ENCODE measurements at regions of chr10 and their contacts with region 1.

Region 1: DNA sequence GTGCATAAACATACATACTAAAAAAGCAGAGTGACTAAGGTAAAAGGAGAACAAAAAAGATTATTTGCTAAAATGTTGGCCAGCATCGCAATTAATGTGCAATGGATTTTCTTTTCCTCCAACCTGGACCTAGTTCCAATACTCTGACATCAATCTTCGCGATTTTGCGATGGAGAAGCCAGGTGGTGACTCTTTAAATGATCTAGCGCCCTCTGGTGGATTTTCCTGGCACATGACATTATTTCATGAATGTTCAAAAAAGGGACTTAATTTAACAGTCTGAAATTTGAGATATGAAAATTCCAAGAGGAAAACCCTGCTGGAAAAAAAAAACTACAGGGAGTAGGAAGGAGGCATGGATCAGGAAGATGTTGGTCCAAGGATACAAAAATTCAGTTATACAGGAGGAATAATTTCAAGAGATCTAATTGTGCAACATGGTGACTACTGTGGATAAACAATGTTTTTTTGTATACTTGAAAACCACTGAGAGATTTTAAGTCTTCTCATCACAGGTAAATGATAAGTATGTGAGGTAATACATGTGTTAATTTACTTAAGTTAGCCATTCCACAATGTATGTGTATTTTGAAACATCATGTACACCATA is 4.3 kb upstream of the KCNMA1 start:
- DNase-seq: peak; percentile 61 to 72
- H3K4me3 ChIP-seq: no peak overlapping the region
- H3K27ac ChIP-seq: no peak overlapping the region
- H3K4me1 ChIP-seq: peaks cover 11% of the 10 kb centered on the region; the same call in 1 of the 2 replicates
- H3K27me3 ChIP-seq: no peaks in the 10 kb centered on the region
- CTCF ChIP-seq: peak; percentile 98

Region 2: DNA sequence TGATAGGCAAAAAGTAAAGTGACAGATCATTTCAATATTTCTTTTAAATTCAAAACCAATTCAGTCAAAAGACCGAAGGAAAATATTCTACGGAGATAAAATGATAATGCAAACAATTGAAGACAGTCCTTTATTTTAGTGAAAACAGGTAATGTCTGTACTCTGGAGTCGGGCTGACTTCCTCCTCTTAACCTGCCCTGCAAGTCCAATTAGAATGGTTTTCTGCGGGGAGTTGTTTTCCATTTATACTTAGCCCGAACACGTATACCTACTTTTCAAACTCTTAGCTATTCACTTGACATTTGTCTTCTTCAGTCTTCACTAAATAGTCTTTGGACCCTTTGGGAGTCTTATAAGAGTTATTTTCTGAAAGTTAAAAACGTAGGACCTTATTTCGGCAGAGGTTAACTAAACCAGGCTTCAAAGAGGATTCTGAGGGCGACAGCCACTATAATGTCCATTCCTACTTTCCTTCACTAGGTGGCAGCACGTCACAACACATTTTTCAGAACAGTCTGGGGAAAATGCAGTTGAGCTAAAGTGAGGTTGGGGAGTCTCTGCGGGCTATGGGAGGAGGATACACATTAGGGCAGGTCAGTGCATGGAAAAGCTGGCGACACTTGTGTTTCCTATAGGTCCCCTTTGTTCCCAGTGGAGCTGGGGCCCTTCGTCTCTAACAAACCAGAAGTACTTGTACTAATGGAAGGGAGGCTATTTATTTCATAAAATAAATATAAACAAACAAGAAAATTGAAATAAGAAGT is 476.3 kb before region 1 on chr10:
- CTCF ChIA-PET with region 1: interaction called, 8 read pairs
- POLR2A ChIA-PET with region 1: no interaction called
- intact Hi-C with region 1: loop called (anchors 2 kb)
- DNase-seq: peak; percentile 49 to 54
- H3K4me3 ChIP-seq: no peak overlapping the region
- H3K27ac ChIP-seq: no peak overlapping the region
- H3K4me1 ChIP-seq: peaks cover 60% of the 10 kb centered on the region
- H3K27me3 ChIP-seq: no peaks in the 10 kb centered on the region
- CTCF ChIP-seq: peak; percentile 96

Region 3: DNA sequence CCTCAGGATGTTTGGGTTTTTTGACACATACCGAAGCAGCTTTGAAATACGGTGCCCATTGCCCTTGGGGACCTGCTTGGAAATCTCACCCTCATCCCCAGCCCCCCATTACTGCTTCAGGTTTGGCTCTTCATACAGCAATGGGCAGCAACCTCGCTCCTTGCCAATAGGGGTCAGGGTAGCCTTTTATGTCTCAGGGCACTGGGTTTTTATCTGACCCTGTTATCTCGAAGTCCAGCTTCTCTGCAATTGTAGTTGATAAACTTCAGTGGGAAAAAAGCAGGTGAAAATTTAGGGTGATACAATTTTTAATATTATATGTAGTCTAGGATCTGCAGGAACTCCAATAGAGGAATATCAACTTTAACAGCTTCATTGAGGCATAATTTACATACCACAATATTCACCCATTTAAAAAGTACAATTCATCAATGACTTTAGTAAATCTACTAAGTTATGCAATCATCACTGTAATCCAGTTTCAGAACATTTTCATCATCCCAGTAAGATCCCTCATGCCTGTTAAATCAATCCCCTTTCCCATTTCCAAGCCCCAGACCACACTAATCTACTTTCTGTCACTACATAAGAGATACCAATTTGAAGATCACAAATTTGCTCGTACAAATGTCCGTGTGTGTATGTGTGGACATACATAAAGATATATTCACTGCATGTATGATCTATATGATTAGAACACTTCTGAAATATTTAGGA is 390.4 kb before region 1 on chr10:
- CTCF ChIA-PET with region 1: no interaction called
- POLR2A ChIA-PET with region 1: no interaction called
- intact Hi-C with region 1: loop called (anchors 1 kb)
- DNase-seq: peak; percentile 29 to 34
- H3K4me3 ChIP-seq: no peak overlapping the region
- H3K27ac ChIP-seq: no peak overlapping the region
- H3K4me1 ChIP-seq: no peaks in the 10 kb centered on the region; the same call in 1 of the 2 replicates
- H3K27me3 ChIP-seq: no peaks in the 10 kb centered on the region
- CTCF ChIP-seq: peak; percentile 79

Region 4: DNA sequence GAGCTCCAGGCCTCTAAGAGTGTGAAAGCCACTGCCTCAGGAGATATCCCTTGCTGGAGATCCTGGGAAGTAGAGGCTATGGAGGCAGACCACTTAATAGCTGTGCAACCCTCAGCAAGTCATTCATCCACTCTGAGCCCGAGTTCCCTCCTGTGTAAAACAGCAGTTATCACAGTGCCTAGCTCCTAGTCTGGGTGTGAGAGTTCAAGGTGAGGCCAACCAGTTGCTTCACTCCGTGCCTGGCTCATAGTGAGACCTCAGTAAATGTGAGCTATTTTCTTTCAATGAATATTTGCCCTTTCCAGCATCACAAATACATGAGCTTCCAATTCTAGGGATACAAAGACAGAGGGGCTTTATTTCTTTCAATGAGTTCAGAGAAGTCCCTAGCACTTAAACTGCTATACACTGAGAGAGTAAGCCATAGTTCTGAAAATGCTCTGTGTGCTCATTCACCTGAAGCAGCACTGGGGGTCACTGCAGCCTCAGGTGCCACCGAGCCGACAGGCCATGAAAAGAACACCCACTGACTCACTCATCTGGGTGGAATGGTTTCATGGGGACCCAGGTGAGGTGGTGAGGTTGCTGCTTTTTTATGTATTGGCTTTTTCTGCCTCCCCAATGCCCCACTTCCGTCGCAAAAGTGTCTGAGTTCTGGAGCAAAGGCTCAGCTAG is 264.1 kb before region 1 on chr10:
- CTCF ChIA-PET with region 1: no interaction called
- POLR2A ChIA-PET with region 1: no interaction called
- intact Hi-C with region 1: loop called (anchors 1 kb)
- DNase-seq: peak in 1 of 2 experiments; percentile 20
- H3K4me3 ChIP-seq: no peak overlapping the region
- H3K27ac ChIP-seq: no peak overlapping the region
- H3K4me1 ChIP-seq: no peaks in the 10 kb centered on the region
- H3K27me3 ChIP-seq: no peaks in the 10 kb centered on the region
- CTCF ChIP-seq: 0 out of 2 replicates have a peak, but pooled peaks have one; percentile 39

Region 5: DNA sequence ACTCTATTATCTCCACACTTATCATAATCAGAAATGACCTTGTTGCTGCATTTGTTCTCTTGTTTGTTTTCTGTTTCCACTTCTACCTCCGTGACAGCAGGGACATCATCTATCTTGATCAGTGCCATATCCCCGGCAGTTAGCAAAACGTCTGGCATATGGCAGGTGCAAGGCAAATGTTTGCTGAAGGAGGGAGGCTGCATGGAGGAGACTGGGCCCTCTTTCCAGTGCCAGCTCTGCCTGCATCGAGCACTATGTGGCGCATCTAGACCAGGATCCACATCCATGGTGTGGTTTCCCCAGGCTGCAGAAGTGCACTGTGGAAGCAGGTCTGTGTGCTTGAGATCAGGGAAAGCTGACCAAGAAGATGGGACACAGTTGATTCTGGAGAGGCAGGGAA is 185.5 kb before region 1 on chr10:
- CTCF ChIA-PET with region 1: interaction called, 5 read pairs
- POLR2A ChIA-PET with region 1: no interaction called
- intact Hi-C with region 1: loop called (anchors 2 kb)
- DNase-seq: no peak
- H3K4me3 ChIP-seq: no peak overlapping the region
- H3K27ac ChIP-seq: no peak overlapping the region
- H3K4me1 ChIP-seq: no peaks in the 10 kb centered on the region
- H3K27me3 ChIP-seq: no peaks in the 10 kb centered on the region
- CTCF ChIP-seq: no peak

Region 6: DNA sequence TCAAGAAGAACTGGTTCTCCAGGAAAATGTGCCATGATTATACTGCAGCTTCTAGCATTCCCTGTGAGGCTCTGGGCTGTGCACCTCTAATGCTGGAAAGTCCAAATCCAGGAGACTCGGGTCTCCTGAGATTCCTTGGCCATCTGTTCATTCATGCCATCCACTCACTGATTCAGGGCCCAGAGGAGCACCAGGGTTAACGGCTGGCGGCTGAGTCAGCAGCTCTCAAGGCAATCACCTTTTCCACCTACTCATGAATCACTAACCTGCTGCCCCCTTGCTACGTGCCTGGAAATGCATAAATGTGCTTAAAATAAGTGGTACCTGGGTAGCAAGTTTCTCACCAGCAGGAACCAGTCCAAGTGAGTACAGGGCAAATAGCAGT is 137.0 kb before region 1 on chr10:
- CTCF ChIA-PET with region 1: interaction called, 8 read pairs
- POLR2A ChIA-PET with region 1: no interaction called
- intact Hi-C with region 1: loop called (anchors 5 kb)
- DNase-seq: peak; percentile 61 to 88
- H3K4me3 ChIP-seq: no peak overlapping the region
- H3K27ac ChIP-seq: peak overlapping the region; percentile 98
- H3K4me1 ChIP-seq: peaks cover 63% of the 10 kb centered on the region
- H3K27me3 ChIP-seq: no peaks in the 10 kb centered on the region
- CTCF ChIP-seq: peak; percentile 64; the same call in 1 of the 2 replicates

Region 7: DNA sequence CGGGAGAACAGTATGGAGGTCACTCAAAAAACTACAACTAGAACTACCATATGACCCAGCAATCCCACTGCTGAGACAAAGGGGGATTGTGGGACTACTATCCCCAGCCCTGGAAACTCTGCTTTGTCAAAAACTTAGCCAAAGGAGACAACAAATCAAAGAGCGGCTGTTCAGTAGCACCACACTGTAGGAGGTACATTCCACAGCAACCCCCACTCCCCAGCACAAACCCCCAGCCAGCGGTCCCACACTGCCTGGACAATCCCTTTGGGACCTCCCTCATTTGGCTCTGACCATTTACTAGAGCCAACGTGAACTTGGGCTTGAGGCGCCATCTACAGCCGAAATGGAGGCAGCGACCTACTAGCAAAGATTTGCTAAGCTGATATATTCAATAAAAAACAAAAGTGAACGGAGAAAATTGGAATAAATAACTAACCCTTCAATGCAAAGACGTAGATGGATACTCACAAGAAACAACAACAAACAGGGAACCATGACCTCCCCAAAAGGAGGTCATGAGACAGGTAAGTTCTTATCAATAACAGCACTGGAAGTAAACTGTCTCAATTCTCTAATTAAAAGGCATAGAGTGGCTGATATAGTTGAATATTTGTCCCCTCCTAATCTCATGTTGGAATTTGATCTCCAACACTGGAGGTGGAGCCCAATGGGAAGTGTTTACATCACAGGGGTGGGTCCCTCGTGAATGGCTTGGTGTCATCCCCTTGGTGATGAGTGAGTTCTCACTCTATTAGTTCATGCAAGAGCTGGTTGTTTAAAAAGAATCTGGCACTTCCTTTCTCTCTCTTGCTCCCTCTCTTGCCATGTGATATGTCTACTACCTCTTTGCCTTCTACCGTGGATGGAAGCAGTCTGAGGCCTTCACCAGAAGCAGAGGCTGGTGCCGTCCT is 114.7 kb after region 1 on chr10:
- CTCF ChIA-PET with region 1: interaction called, 7 read pairs
- POLR2A ChIA-PET with region 1: no interaction called
- intact Hi-C with region 1: loop called (anchors 1 kb)
- DNase-seq: peak; percentile 41 to 55
- H3K4me3 ChIP-seq: no peak overlapping the region
- H3K27ac ChIP-seq: no peak overlapping the region
- H3K4me1 ChIP-seq: 0 out of 2 replicates have a peak, but pooled peaks cover 5% of the 10 kb centered on the region
- H3K27me3 ChIP-seq: no peaks in the 10 kb centered on the region
- CTCF ChIP-seq: peak; percentile 90